Esophagus squamous epithelium (tissue), 5 donors: ENCODE measurements at regions of chr4 and their contacts with region 1.

Region 1: DNA sequence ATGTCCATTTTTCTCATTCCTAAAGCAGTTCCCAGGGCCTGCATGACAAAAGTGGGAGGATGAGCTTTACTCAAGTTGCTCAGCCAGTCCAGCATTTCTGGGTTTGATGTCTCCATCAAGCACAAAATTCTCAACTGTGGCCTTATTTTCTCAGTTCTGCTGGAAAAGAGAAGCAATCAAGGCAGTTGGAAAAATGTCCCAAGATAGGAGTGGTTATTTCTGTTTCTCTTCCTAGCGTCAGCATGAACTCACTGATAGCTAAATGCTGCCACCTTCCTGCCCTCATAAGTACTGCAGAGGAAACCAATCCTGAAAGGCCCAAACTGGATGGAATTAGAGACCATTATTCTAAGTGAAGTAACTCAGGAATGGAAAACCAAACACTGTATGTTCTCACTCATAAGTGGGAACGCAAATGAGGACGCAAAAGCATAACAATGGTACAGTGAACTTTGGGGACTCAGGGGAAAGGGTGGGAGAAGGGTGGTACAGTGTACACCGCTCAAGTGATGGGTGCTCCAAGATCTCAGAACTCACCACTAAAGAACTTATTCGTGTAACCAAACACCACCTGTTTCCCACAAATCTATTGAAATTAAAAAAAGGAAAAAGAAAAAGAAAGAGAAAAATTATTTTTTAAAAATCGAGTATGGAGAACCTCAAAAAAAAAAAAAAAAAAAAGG is 29.6 kb downstream of the ADH7 start:
- DNase-seq: no peak
- H3K4me3 ChIP-seq: no peak overlapping the region
- H3K27ac ChIP-seq: peak overlapping the region in 3 of 4 donors; percentile 70 to 75 (median 73)
- H3K4me1 ChIP-seq: peaks cover 6 to 60% (median 22%) of the 10 kb centered on the region in 3 donors
- H3K27me3 ChIP-seq: no peaks in the 10 kb centered on the region
- CTCF ChIP-seq: peak; percentile 79 to 97 (median 95)
- POLR2A ChIP-seq: no peak

Region 2: GRCh38 chr4:99120501-99120900 is 285.1 kb before region 1 on chr4:
- intact Hi-C with region 1: loop called (anchors 10 kb)
- DNase-seq: no peak
- H3K4me3 ChIP-seq: no peak overlapping the region
- H3K27ac ChIP-seq: no peak overlapping the region
- H3K4me1 ChIP-seq: peaks cover 0 to 4% (median 0%) of the 10 kb centered on the region in 3 donors
- H3K27me3 ChIP-seq: no peaks in the 10 kb centered on the region
- CTCF ChIP-seq: no peak
- POLR2A ChIP-seq: no peak

Region 3: DNA sequence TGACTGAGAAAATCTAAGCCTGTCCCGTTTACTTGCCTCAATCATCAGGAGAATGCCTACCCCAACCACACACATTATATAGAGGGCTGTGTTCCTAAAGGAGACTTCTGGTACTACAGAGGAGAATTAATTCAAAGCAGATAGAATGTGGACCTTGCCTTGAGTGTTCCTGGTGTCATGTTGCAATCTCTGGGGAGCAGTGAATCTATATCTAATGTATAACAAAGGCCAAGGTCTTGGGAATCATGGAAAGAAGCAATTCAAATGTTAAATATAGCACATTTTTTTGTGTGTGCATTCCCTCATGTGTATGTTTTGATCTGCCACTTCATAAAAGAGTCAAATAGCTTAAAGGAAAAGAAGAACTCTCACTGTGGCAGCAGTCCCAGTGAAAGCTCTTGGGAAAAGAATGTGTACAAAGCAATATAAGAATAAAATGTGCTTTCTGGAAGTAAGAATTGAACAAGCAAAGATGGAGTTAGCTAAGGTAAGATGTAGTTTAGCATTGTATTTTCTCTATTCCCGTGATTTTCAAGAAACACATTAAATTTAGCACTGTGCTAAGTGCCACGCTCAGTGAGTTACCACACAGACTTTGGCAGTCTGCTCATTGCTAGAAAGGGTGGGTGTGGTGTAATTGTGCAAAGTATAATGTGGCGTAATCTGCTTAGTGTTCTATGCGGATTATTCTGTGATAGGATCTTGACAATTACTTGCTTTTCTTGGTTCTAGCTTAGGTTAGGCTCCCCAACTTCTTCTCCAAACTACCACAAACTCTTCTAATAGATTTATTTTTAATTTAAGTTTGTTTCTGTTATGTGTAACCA is 200.2 kb before region 1 on chr4:
- intact Hi-C with region 1: loop called (anchors 10 kb)
- DNase-seq: no peak
- H3K4me3 ChIP-seq: no peak overlapping the region
- H3K27ac ChIP-seq: peak overlapping the region; percentile 25 to 42 (median 38)
- H3K4me1 ChIP-seq: peaks cover 0 to 60% (median 7%) of the 10 kb centered on the region in 3 donors
- H3K27me3 ChIP-seq: no peaks in the 10 kb centered on the region
- CTCF ChIP-seq: peak in 1 of 6 experiments; percentile 5
- POLR2A ChIP-seq: no peak